Naive thymus-derived CD4-positive, alpha-beta T cell (primary cell): ENCODE measurements at regions of chr9 and their contacts with region 1.

Region 1: DNA sequence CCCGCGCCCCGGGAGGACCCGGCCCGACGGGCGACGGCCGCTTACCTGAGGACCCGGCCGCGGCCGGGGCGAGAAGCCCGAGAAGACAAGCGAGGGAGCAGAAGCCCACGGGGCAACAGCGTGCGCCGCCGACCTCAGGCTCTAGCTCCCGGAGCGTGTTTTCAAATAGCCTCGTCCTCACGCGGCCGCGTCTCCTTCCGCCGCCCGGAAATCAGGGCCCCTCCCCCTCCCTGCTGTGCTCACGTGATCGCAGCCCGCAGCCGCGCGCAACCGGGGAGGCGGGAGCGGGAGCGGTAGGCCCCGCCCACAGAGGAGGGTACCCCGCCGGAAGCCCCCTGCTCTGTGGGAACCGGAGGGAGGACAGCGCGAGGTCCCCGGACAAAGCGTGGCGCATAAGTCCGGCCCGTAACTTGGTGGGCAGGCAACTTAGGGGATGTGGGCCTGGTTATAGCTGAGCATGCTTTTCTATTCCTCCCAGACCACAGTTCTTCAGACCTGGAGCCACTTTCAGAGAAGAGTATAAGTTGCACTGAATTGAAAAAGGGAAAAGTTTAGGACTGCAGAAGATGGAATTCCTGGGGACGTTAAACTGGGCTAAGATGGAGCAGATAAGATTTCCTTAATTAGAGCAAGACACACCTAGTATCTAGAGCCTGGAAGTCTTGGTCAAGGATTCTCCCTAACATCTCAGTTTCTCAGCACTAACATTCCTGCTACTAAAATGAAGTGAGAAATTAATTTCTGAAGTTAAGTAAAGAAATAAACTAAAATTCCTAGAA is at the start of gene TEX10:
- DNase-seq: peak; percentile 80 to 94 (median 87)
- ATAC-seq: peak; percentile 96
- H3K4me3 ChIP-seq: peak within 1 kb of the TSS; percentile 79
- H3K4me3 Mint-ChIP-seq: peak within 1 kb of the TSS; percentile 87 to 99 (median 94)
- H3K27ac ChIP-seq: peak within 1 kb of the TSS; percentile 82
- H3K27ac Mint-ChIP-seq: peak within 1 kb of the TSS; percentile 77 to 94 (median 86)
- H3K4me1 ChIP-seq: peaks cover 8 to 22% of the 10 kb centered on the region in 2 donors
- H3K4me1 Mint-ChIP-seq: peaks cover 32 to 62% (median 53%) of the 10 kb centered on the region in 7 donors
- H3K27me3 ChIP-seq: no peaks in the 10 kb centered on the region
- H3K27me3 Mint-ChIP-seq: no peaks in the 10 kb centered on the region
- total RNA-seq, gene TEX10: 11.0 to 24.6 (median 18.2) TPM

Region 2: DNA sequence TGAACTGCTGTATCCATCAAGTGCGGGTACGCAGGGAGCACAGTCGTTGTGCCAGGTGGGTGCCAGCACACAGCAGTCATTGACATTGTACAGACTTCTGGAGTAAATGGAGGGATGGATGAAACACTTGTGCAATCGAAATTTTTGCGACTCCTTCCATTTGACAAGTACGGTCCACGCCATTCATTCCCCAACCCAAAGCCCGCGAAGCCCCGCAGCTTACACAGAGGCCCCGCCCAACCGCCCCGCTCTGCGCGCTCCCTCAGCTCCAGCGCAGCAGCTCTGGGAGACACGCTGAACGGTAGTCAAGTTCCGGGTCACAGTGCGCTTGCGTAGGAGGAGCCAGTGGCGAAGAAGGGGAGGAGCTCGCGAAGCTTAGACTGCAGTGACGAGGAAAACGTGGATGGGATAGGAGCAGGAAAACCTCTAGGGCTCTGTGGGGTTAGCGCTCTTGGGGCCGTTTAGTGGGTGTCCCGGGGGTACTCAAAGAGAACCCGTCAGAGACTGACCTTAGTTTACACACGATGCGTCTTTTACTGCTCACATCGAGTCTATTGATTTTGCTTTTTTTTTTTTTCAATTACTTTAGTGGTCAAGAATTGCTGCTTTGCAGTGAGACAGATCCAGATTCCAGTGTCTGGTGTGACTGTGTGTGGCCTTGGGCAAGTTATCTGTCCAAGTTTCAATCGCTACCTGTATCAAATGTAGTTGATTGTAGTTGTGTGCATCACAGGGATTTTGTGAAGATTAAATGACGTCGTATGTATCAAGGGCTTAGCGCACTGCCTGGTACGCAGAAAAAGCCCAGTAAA is 58.8 kb after region 1 on chr9:
- CTCF ChIA-PET with region 1: no interaction called
- POLR2A ChIA-PET with region 1: no interaction called
- intact Hi-C with region 1: loop called (anchors 1 kb)
- DNase-seq: peak; percentile 58 to 87 (median 80)
- ATAC-seq: peak; percentile 100
- H3K4me3 ChIP-seq: peak overlapping the region; percentile 91
- H3K4me3 Mint-ChIP-seq: peak overlapping the region; percentile 83 to 98 (median 89)
- H3K27ac ChIP-seq: peak overlapping the region; percentile 55
- H3K27ac Mint-ChIP-seq: peak overlapping the region; percentile 56 to 90 (median 84)
- H3K4me1 ChIP-seq: peaks cover 10 to 15% of the 10 kb centered on the region in 2 donors
- H3K4me1 Mint-ChIP-seq: peaks cover 10 to 16% (median 13%) of the 10 kb centered on the region in 7 donors
- H3K27me3 ChIP-seq: no peaks in the 10 kb centered on the region
- H3K27me3 Mint-ChIP-seq: peaks cover 6 to 21% (median 15%) of the 10 kb centered on the region in 5 donors

Region 3: DNA sequence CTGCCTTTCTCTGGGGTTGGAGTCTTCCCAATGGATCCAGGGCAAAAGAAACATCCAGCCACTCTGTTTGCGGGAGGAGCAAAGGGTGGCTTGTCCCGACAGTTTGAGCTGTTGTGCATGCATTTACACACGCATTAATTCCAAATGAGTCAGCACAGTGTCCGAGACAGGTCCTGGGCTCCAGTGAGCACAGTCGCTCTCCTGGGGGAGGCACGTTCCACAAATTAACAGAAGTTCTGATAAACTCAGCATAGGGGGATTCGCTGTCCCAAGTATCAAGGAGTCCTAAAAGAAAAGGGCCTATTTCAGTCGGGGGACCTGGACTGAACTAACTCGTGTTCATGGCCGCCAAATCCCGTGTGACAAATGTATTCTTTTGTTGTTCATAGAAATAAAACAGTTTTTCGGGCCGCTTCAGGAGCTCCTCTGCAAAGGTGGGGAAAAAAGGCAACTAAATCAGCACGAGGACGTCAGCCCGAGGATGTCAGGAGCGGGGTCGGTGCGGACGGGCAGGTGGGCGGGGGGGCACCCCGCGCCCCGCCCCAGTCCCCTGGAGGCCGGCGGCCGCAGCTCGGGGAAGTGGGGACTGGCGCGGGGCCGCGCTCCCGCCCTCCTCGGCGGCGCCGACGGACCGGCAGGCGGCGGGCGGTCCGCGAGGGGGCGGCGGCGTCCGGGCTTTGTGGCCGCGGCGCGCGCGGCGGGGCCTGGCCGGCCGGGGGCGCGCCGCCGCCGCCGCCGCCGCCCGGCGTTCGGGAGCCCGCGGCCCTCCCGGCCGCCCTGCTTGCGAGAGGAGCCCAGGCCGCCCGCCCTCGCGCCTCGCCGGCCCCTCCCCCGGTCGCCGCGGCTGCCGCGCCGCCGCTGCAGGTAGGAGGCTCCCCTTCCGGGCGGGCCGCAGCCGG is 73.9 kb after region 1 on chr9 and contains the start of gene MSANTD3:
- CTCF ChIA-PET with region 1: interaction called, 6 read pairs
- POLR2A ChIA-PET with region 1: interaction called, 4 read pairs
- intact Hi-C with region 1: loop called (anchors 1 kb)
- DNase-seq: peak; percentile 22 to 67 (median 44)
- ATAC-seq: peak; percentile 87
- H3K4me3 ChIP-seq: peak within 1 kb of the TSS; percentile 73
- H3K4me3 Mint-ChIP-seq: peak within 1 kb of the TSS; percentile 90 to 99 (median 96)
- H3K27ac ChIP-seq: peak within 1 kb of the TSS; percentile 68
- H3K27ac Mint-ChIP-seq: peak within 1 kb of the TSS; percentile 84 to 98 (median 93)
- H3K4me1 ChIP-seq: peaks cover 7 to 8% of the 10 kb centered on the region in 2 donors
- H3K4me1 Mint-ChIP-seq: peaks cover 22 to 48% (median 42%) of the 10 kb centered on the region in 7 donors
- H3K27me3 ChIP-seq: no peaks in the 10 kb centered on the region
- H3K27me3 Mint-ChIP-seq: peaks cover 0 to 18% (median 2%) of the 10 kb centered on the region in 5 donors
- total RNA-seq, gene MSANTD3: 6.8 to 13.4 (median 12.0) TPM